ENCODE measurements at regions of chr7 and their contacts with region 1.

Region 1: DNA sequence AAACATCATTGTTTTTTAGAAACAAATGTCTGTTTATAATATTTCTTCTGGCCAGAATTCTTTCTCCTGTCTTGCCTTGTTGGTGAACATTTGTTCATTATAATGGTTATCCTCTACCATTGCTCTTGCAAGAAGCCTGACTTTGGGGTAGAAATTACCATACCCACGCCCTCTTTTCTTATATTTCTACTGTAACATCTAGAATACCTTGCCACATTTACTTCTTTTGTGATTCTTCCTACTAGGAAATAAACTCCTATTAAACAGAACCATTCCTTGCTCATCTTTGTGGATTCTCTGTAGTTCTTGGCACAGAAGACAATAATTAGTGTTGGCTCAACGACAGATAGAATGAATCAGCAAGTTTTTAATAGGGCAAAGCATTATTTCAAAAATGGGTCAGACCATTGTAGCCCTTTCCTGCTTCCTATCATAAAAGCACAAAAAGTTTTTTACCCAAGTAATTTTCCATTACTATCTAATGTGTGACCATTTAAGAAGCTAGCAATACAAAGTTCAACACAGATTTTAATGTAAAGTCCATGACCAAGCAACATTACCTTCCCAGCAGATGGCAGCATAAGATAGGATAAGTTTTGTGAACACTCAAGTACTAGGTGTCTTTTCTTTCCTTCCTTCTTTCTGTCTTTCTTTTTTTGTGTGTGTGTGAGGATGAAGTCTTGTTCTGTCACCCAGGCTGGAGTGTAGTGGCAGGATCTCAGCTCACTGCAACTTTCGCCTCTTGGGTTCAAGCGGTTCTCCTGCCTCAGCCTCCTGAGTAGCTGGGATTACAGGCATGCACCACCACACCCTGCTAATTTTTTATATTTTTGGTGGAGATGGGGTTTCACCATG is 270.4 kb downstream of the HGF start:
- DNase-seq: peak; percentile 63
- ATAC-seq: peak; percentile 87
- H3K4me3 ChIP-seq: no peak overlapping the region
- H3K27ac ChIP-seq: no peak overlapping the region
- H3K4me1 ChIP-seq: no peaks in the 10 kb centered on the region
- H3K27me3 ChIP-seq: no peaks in the 10 kb centered on the region
- CTCF ChIP-seq: peak; percentile 78
- EP300 ChIP-seq: no peak
- POLR2A ChIP-seq: no peak
- RAD21 ChIP-seq: peak; percentile 35; the same call in 1 of the 2 replicates

Region 2: GRCh38 chr7:81447351-81447952 is 52.0 kb before region 1 on chr7:
- CTCF ChIA-PET with region 1: no interaction called
- POLR2A ChIA-PET with region 1: no interaction called
- in situ Hi-C with region 1: no loop called
- intact Hi-C with region 1: no loop called
- DNase-seq: peak; percentile 27
- ATAC-seq: peak; percentile 89
- H3K4me3 ChIP-seq: no peak overlapping the region
- H3K27ac ChIP-seq: no peak overlapping the region
- H3K4me1 ChIP-seq: no peaks in the 10 kb centered on the region
- H3K27me3 ChIP-seq: no peaks in the 10 kb centered on the region
- CTCF ChIP-seq: peak; percentile 56
- EP300 ChIP-seq: no peak
- POLR2A ChIP-seq: no peak
- RAD21 ChIP-seq: no peak

Region 3: GRCh38 chr7:81776948-81777630 is 277.6 kb after region 1 on chr7:
- CTCF ChIA-PET with region 1: interaction called, 6 read pairs
- POLR2A ChIA-PET with region 1: no interaction called
- in situ Hi-C with region 1: no loop called
- intact Hi-C with region 1: loop called (anchors 1 kb)
- DNase-seq: peak; percentile 0
- ATAC-seq: no peak; the same call in 2 of the 3 replicates
- H3K4me3 ChIP-seq: no peak overlapping the region
- H3K27ac ChIP-seq: no peak overlapping the region
- H3K4me1 ChIP-seq: no peaks in the 10 kb centered on the region
- H3K27me3 ChIP-seq: no peaks in the 10 kb centered on the region
- CTCF ChIP-seq: no peak
- EP300 ChIP-seq: no peak
- POLR2A ChIP-seq: no peak
- RAD21 ChIP-seq: no peak

Region 4: DNA sequence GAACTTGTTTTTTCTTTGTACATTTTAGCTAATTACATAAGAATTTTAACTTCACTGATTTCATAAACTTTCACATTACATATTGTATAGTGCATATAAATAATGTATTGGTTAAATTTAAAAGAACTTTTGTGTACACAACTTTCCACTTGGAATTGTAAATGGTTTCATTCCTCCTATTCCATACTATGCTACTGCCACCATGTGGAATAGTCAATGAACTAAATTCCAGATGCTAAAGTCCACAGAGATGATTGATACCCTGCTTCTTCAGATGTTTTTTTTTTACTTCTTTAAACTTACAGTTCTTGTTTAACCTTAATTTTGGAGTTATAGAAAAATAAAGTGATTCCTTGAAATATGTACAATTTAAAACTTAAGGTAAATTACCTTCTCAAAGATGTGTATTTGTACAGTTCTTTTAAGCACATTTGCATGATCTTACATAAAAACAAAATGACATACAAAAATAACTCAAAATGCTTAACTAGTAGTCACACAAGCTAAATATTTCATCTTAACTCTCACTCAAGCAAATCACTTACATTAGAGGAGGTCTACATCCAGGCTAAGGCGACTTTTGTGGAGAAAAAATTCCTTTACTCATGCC is 518.0 kb after region 1 on chr7:
- CTCF ChIA-PET with region 1: interaction called, 6 read pairs
- POLR2A ChIA-PET with region 1: no interaction called
- in situ Hi-C with region 1: no loop called
- intact Hi-C with region 1: loop called (anchors 1 kb)
- DNase-seq: peak; percentile 9
- ATAC-seq: peak; percentile 57; the same call in 1 of the 3 replicates
- H3K4me3 ChIP-seq: no peak overlapping the region
- H3K27ac ChIP-seq: no peak overlapping the region
- H3K4me1 ChIP-seq: no peaks in the 10 kb centered on the region
- H3K27me3 ChIP-seq: no peaks in the 10 kb centered on the region
- CTCF ChIP-seq: peak; percentile 51
- EP300 ChIP-seq: no peak
- POLR2A ChIP-seq: no peak
- RAD21 ChIP-seq: no peak

Region 5: GRCh38 chr7:82572195-82572880 is 1072.8 kb after region 1 on chr7:
- CTCF ChIA-PET with region 1: interaction called, 3 read pairs
- POLR2A ChIA-PET with region 1: no interaction called
- in situ Hi-C with region 1: loop called (anchors 25 kb)
- intact Hi-C with region 1: no loop called
- DNase-seq: peak; percentile 70
- ATAC-seq: peak; percentile 95
- H3K4me3 ChIP-seq: no peak overlapping the region
- H3K27ac ChIP-seq: no peak overlapping the region
- H3K4me1 ChIP-seq: no peaks in the 10 kb centered on the region
- H3K27me3 ChIP-seq: no peaks in the 10 kb centered on the region
- CTCF ChIP-seq: peak; percentile 83
- EP300 ChIP-seq: no peak
- POLR2A ChIP-seq: no peak
- RAD21 ChIP-seq: no peak

Region 6: DNA sequence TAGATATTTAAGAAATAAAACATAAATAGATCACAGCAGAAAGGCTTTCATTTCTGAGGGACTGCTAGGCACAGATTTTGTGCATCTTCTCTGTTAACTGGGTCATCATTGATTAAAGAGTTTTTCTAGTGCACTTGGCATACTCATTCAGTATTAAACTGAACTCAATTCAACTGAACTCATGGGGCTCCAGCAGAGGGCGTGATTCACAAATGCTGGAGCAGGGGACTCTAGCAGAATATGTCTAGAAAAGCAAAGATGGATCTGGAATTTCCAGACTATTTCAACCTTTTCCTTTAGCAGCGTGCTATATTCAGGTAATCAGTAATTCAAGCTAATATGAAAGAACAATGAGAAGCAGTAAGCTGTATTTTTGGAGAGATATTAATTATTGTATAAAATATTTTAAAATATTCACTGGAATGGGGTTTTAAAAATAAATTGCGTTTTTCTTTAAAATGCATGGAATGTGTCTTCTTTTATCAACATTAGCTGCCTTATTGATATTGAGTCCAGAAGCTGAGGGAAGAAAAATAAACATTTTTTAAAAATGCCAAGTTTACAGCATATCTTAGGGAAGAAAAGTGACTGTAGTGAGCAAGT is 1240.9 kb after region 1 on chr7:
- CTCF ChIA-PET with region 1: no interaction called
- POLR2A ChIA-PET with region 1: no interaction called
- in situ Hi-C with region 1: loop called (anchors 25 kb)
- intact Hi-C with region 1: no loop called
- DNase-seq: peak; percentile 28
- ATAC-seq: peak; percentile 69
- H3K4me3 ChIP-seq: no peak overlapping the region
- H3K27ac ChIP-seq: no peak overlapping the region
- H3K4me1 ChIP-seq: no peaks in the 10 kb centered on the region
- H3K27me3 ChIP-seq: no peaks in the 10 kb centered on the region
- CTCF ChIP-seq: peak; percentile 43
- EP300 ChIP-seq: no peak
- POLR2A ChIP-seq: no peak
- RAD21 ChIP-seq: no peak

Measured in HepG2 (cell line).